ENCODE measurements at regions of chr19 and their contacts with region 1.

Region 1: DNA sequence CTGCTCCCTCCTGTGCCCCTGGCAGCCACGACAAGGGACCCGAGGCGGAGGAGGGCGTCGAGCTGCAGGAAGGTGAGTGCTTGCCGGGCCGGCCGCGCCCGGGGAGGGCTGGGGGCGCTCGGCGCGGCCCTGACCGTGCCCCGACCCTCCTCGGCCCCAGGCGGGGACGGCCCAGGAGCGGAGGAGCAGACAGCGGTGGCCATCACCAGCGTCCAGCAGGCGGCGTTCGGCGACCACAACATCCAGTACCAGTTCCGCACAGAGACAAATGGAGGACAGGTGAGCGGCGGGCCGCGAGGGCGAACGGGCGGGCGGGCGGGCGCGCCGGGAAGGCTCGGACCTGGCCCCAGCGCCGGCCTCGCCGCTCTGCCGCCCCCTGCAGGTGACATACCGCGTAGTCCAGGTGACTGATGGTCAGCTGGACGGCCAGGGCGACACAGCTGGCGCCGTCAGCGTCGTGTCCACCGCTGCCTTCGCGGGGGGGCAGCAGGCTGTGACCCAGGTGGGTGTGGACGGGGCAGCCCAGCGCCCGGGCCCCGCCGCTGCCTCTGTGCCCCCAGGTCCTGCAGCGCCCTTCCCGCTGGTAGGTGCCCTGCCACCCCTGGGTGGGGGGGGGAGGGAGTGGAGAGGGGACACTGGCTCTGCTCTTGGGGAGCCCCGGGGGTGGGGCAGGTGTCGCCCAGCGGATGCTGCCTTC is 807 bp downstream of the USF2 start:
- DNase-seq: peak; percentile 68 to 93
- H3K4me3 ChIP-seq: peak overlapping the region; percentile 66
- H3K27ac ChIP-seq: peak overlapping the region; percentile 47; the same call in 1 of the 2 replicates
- H3K4me1 ChIP-seq: peaks cover 14% of the 10 kb centered on the region; the same call in 1 of the 2 replicates
- H3K27me3 ChIP-seq: no peaks in the 10 kb centered on the region
- CTCF ChIP-seq: peak; percentile 70

Region 2: GRCh38 chr19:35098413-35099049 is 171.0 kb before region 1 on chr19:
- CTCF ChIA-PET with region 1: interaction called, 10 read pairs
- POLR2A ChIA-PET with region 1: no interaction called
- intact Hi-C with region 1: no loop called
- DNase-seq: no peak
- H3K4me3 ChIP-seq: no peak overlapping the region
- H3K27ac ChIP-seq: no peak overlapping the region
- H3K4me1 ChIP-seq: no peaks in the 10 kb centered on the region
- H3K27me3 ChIP-seq: no peaks in the 10 kb centered on the region
- CTCF ChIP-seq: no peak

Region 3: DNA sequence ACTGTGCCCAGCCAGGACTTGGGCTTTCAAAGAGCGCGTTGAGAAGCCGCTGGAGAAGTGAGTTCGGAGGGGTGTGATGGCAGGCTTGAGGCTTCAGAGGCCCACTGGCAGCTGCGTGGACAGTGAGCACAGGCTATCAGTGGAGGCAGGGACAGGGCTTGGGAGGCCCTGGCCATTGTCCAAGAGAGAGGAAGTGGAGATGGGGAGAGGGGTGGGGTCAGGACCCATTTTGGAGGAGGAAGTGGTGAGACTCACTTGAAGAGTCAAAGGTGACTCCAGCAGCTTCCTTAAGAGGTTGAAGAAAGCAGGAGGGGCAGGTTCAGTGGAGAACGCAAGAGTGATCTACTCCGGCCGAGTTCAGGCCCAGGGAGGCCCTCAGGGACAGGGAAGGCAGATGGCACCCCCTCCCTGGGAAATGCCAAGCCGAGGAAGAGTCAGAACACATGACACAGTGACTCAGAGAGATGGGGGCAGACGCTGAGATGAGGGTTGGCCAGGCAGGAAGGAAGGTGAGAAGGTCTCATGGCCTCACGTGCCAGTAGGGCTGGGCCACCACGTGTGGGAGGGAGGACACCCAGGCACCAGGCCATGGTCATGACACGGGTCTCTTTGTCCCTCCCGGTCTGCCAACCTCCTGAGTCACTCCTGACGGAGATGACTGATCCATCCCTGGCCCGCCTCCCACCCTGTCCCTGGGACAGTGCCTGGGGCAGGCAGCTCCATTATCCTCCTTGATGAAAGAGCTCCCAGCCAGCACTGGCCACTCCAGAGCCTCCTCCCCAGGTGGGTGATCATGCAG is 49.3 kb after region 1 on chr19:
- CTCF ChIA-PET with region 1: interaction called, 11 read pairs
- POLR2A ChIA-PET with region 1: interaction called, 3 read pairs
- intact Hi-C with region 1: loop called (anchors 1 kb)
- DNase-seq: peak; percentile 98 to 99
- H3K4me3 ChIP-seq: peak overlapping the region; percentile 11; the same call in 1 of the 2 replicates
- H3K27ac ChIP-seq: peak overlapping the region; percentile 98
- H3K4me1 ChIP-seq: peaks cover 63% of the 10 kb centered on the region
- H3K27me3 ChIP-seq: no peaks in the 10 kb centered on the region
- CTCF ChIP-seq: no peak

Region 4: GRCh38 chr19:35468637-35469036 is 199.1 kb after region 1 on chr19:
- CTCF ChIA-PET with region 1: no interaction called
- POLR2A ChIA-PET with region 1: no interaction called
- intact Hi-C with region 1: loop called (anchors 2 kb)
- DNase-seq: peak; percentile 38 to 55
- H3K4me3 ChIP-seq: no peak overlapping the region
- H3K27ac ChIP-seq: no peak overlapping the region
- H3K4me1 ChIP-seq: no peaks in the 10 kb centered on the region
- H3K27me3 ChIP-seq: no peaks in the 10 kb centered on the region
- CTCF ChIP-seq: peak; percentile 79